ENCODE measurements at regions of chr2 and their contacts with region 1.

Region 1: GRCh38 chr2:63588385-63589147 is at the starts of genes MDH1 and WDPCP:
- DNase-seq: peak; percentile 91 to 96
- ATAC-seq: peak; percentile 92 to 96 (median 94)
- H3K4me3 ChIP-seq: peak within 1 kb of the TSS; percentile 66 to 99 (median 86)
- H3K27ac ChIP-seq: peak within 1 kb of the TSS; percentile 85 to 98 (median 95)
- H3K4me1 ChIP-seq: peaks cover 0 to 64% (median 32%) of the 10 kb centered on the region in 9 donors
- H3K27me3 ChIP-seq: no peaks in the 10 kb centered on the region
- CTCF ChIP-seq: no peak
- total RNA-seq, gene MDH1: 1,047 to 1,698 (median 1,599) TPM
- total RNA-seq, gene WDPCP: 10.3 to 36.6 (median 23.5) TPM

Region 2: DNA sequence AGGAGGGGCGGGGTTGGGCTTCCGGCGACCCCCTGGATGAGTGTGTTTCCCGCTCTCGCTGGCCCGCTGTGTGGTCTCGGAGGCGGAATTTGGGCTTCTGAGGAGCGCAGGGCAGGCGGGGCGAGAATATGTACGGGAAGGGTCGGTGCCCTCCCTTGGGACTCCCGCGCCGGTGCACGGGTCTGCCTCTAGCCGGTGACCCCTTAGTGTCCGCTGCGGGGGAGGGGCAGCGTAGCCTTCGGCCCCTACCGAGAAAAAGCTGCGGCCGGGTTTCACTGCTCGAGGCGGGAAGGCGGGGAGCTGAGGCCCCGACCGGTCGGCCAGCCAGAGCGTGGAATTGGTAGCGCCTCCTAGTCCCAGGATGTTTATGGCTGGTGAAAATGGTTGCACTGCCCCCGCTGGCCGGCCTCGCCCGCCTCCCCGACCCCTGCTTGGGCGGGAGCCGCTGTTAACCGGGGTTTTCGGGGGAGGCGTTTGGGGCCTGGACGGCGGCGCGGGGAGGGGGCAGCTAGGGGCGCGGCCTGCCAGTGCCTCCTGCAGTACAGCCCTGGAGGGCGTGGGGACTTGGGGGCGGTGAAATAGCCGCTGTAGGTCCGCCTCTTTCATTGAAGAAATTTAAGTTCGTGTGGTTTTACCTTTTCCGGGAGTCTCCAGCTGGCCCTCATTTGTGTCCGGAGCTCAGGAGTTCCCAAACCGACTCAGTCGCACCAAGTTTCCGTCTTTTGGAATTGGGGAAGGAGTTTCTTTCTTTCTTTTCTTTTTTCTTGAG is 252.9 kb after region 1 on chr2 and contains the start of gene UGP2:
- intact Hi-C with region 1: loop called in 2 of 10 experiments (anchors 5 to 10 kb)
- DNase-seq: peak; percentile 90 to 91
- ATAC-seq: peak; percentile 86 to 94 (median 91)
- H3K4me3 ChIP-seq: peak within 1 kb of the TSS; percentile 75 to 97 (median 88)
- H3K27ac ChIP-seq: peak within 1 kb of the TSS; percentile 93 to 100 (median 98)
- H3K4me1 ChIP-seq: peaks cover 4 to 52% (median 35%) of the 10 kb centered on the region in 9 donors
- H3K27me3 ChIP-seq: no peaks in the 10 kb centered on the region
- CTCF ChIP-seq: peak in 7 of 9 donors; percentile 12 to 59 (median 21)
- total RNA-seq, gene UGP2: 250 to 457 (median 371) TPM

Region 3: DNA sequence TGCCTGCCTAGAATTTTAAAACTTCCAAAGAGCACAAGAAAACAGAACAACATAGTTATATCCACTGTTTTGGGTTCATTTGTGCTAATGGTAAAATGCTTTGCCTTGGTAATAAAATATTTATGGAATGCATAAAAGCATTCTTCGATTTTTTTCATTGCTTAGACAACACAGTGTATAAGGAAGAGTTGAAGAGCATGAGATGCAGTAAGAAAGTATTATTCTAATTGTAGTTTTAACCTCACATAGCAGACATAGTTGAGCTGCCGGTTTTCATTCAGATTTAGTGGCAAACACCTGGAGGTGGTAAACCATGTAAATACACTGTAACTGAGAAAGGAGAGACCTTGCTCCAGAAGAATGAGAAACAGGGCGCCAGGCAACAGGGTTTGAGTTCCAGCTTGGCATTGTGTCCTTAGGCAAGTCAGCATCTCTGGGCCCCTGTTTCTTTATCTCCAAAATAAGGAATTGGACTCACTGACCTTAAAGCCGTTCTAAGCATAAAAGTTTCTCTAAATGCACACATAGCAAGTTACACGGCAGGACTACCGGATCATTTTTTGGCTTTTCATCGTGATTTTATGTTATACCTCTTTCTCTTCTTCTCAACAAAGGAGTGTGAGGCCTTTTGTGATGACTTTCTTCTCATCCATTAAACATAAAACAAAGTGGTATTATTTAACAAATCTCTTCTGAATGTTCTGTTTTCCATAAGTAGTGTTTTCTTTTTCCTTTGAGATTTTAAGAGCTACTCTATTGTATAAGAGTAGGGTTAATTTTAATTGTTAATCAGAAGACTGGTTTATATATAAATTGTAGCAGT is 261.0 kb after region 1 on chr2:
- intact Hi-C with region 1: loop called in 3 of 10 experiments (anchors 5 to 10 kb)
- DNase-seq: no peak
- ATAC-seq: no peak
- H3K4me3 ChIP-seq: peak overlapping the region in 1 of 10 donors; percentile 2
- H3K27ac ChIP-seq: peak overlapping the region in 6 of 10 donors; percentile 10 to 52 (median 30)
- H3K4me1 ChIP-seq: peaks cover 2 to 93% (median 77%) of the 10 kb centered on the region in 9 donors
- H3K27me3 ChIP-seq: no peaks in the 10 kb centered on the region
- CTCF ChIP-seq: no peak